ENCODE measurements at regions of chr3 and their contacts with region 1.

Region 1: DNA sequence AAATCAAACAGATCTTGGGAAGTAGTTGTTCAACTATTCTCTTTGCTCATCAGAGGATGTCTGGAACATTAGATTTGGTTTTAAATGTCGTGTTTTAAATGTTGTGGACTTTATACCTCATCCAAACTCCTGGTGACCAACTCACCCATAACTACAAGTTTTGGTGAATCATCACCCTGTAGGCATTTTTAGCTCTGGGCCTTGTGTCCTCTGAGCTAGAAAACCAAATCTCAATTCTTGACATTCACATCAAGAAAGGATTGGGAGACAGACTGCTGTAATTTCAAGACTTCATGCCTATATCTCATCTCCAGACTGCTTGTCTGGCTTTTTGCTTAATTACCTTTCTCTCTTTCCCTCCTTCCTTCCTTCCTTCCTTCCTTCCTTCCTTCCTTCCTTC is 228.5 kb upstream of the ROBO2 start:
- DNase-seq: no peak
- H3K4me3 Mint-ChIP-seq: no peak overlapping the region
- H3K27ac Mint-ChIP-seq: no peak overlapping the region
- H3K4me1 Mint-ChIP-seq: no peaks in the 10 kb centered on the region
- H3K27me3 Mint-ChIP-seq: no peaks in the 10 kb centered on the region
- CTCF ChIP-seq: no peak

Region 2: DNA sequence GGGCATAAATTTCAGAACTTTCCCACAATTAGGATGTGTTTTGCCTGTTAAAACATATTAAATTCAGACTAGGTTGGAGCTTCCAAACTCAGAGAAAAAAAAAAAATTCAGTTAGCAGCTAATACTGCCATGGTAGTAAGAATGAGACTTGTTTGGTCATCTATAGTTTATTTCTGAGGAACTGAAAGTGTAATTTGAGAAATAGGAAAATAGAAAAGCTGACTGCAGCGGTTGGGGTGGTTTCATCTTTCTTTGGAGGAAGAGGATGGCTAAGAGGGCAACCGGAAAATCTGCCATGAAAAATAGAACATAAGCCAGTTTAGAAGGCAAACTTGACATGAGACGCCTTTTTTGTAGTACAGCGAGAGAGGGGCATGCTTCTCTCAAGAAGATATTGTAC is 142.8 kb before region 1 on chr3:
- CTCF ChIA-PET with region 1: interaction called, 12 read pairs
- intact Hi-C with region 1: no loop called
- DNase-seq: no peak
- H3K4me3 Mint-ChIP-seq: no peak overlapping the region
- H3K27ac Mint-ChIP-seq: no peak overlapping the region
- H3K4me1 Mint-ChIP-seq: no peaks in the 10 kb centered on the region
- H3K27me3 Mint-ChIP-seq: no peaks in the 10 kb centered on the region
- CTCF ChIP-seq: no peak

Region 3: GRCh38 chr3:76753599-76753998 is 57.8 kb before region 1 on chr3:
- CTCF ChIA-PET with region 1: no interaction called
- intact Hi-C with region 1: no loop called
- DNase-seq: no peak
- H3K4me3 Mint-ChIP-seq: no peak overlapping the region
- H3K27ac Mint-ChIP-seq: no peak overlapping the region
- H3K4me1 Mint-ChIP-seq: peaks cover 12% of the 10 kb centered on the region
- H3K27me3 Mint-ChIP-seq: no peaks in the 10 kb centered on the region
- CTCF ChIP-seq: no peak